Cardiac septum (tissue), 1 donor: ENCODE measurements at regions of chr14 and their contacts with region 1.

Region 1: DNA sequence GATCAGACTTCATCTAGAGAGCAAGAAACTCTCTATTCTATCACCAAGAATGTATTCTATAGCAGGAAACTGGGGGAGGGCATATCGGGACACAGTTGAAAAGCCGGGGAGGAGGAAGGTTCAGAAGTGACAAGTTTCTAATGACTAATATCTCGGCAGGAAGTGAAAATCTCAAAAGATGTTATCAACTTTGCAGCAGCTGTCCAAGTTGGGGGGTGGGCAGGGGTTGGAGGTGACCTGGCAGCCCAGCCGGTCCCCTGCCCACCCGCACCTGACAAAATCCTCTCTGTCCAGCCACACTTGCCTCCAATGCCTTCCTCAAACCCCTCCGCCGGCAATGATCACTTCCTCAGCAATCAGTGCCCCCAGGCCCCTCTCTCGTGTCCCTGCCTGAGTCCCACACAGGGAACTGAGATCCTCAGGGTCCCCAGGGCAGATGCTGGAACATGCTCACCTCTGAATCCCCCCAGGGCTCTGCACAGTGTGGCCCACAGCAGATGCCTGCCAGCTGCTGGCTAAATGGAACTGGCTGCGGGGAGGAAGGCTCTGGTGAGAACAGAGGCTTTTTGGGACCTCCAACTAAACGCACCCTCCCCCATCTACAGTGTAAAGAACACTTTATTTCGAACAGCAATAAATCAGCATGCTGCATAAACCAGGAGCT is 43.9 kb downstream of the CCDC88C start:
- DNase-seq: no peak

Region 2: GRCh38 chr14:91350813-91351511 is 22.8 kb before region 1 on chr14:
- intact Hi-C with region 1: no loop called
- DNase-seq: no peak

Region 3: DNA sequence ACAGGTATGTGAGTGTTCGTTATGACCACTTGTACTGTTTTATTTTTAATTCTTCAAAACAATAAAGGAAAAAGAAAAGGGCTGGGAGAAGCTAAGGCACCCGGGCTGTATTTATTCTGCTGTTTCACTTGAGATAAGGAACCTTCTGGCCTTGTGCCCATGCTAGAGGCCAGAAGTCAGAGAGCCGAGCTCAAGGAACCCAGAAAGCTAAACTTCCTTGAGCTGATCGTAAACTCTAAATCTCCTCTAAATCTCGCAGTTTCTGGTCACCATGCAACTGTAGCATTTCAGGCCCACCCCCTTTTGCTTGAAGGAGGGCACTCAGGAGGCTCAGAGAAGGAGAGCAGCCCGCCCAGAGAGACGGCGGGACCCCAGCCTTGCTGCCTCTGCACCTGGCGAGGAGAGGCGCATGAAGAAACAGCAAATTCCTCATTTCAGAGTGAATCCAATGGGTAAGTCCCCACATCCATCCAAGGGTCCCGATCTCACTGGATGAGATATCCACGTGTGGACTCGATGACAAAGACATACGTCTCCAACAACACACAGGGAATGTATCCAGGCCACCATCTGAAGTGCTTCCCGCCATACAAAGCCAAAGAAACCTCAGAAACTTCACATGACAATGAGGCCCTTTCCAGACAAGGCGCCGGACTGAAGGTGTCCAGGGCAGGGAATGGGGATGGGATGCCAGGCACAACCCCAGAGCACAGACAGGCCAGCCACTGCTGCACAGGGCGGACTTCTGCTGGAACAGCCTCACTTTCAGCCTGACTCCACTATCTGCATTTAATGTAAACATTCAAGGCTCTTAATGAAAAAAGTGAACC is 29.3 kb after region 1 on chr14:
- intact Hi-C with region 1: no loop called
- DNase-seq: no peak

Region 4: GRCh38 chr14:91418387-91419043 is 44.8 kb after region 1 on chr14:
- intact Hi-C with region 1: loop called (anchors 5 kb)
- DNase-seq: peak; percentile 89

Region 5: DNA sequence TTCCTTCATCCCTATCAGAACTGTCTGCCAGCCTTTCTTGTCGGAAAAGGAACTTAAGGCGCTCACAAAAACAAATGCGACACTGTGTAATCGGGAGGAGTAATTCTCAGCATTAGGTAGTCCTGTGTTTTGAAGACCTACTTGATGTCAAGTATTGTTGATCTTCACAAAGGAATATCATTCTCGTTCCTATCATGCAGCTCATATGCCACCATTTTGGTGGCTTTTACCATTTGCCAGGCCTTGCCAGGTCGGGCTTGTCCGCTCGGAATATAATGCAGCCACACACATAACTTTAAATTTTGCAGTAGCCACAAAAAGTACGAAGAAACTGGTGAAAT is 137.3 kb after region 1 on chr14:
- intact Hi-C with region 1: no loop called
- DNase-seq: no peak